ENCODE measurements at regions of chr11 and their contacts with region 1.

Region 1: GRCh38 chr11:69817265-69818230 is 1.7 kb downstream of the FGF3 start:
- DNase-seq: peak; percentile 43
- ATAC-seq: peak; percentile 27
- H3K4me3 Mint-ChIP-seq: peak overlapping the region; percentile 50
- H3K27ac Mint-ChIP-seq: no peak overlapping the region
- H3K4me1 Mint-ChIP-seq: peaks cover 7% of the 10 kb centered on the region; the same call in 1 of the 2 replicates
- H3K27me3 Mint-ChIP-seq: peaks cover 90% of the 10 kb centered on the region
- CTCF ChIP-seq: no peak

Region 2: GRCh38 chr11:69744435-69744834 is 73.1 kb before region 1 on chr11:
- CTCF ChIA-PET with region 1: no interaction called
- POLR2A ChIA-PET with region 1: no interaction called
- DNase-seq: no peak
- ATAC-seq: peak; percentile 27
- H3K4me3 Mint-ChIP-seq: no peak overlapping the region
- H3K27ac Mint-ChIP-seq: peak overlapping the region; percentile 87; the same call in 1 of the 2 replicates
- H3K4me1 Mint-ChIP-seq: peaks cover 16% of the 10 kb centered on the region
- H3K27me3 Mint-ChIP-seq: peaks cover 2% of the 10 kb centered on the region
- CTCF ChIP-seq: no peak

Region 3: DNA sequence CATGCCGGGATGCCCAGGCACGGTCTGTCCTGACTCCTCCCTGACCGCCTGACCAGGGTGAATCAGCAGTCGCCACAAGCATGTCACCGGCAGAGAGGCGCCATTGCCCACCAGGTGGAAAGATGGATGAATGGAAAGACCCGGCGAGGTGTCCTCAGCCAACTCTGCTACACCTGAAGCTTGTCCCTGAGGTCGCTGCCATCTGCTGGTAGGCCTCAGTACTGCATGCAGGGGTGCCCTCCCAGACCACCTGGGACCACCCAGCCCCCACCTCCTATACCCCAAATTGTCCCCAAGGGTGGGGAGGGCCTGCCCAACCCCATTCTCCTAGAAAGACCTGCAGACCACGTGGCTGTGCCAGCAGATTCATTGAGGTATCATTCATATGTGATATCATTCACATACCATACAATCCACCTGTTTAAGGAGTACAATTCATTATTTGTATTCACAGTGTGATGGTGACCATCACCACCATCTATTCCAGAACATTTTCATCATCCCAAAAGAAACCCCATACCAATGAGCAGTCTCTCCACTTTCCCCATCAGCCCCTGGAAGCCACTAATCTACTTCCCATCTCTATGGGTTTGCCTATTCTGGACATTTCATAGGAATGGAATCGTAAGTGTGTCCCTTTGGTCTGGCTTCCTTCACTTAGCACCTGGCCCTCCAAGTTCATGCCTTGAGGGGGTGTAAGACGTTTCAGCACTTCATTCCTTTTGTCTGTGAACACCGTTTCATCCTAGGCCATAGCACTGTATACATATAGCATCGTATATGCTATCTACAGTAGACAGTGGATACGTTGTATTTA is 15.8 kb before region 1 on chr11:
- CTCF ChIA-PET with region 1: interaction called, 12 read pairs
- POLR2A ChIA-PET with region 1: no interaction called
- DNase-seq: peak; percentile 95
- ATAC-seq: peak; percentile 83
- H3K4me3 Mint-ChIP-seq: no peak overlapping the region
- H3K27ac Mint-ChIP-seq: no peak overlapping the region
- H3K4me1 Mint-ChIP-seq: no peaks in the 10 kb centered on the region
- H3K27me3 Mint-ChIP-seq: no peaks in the 10 kb centered on the region; the same call in 1 of the 2 replicates
- CTCF ChIP-seq: peak; percentile 97

Region 4: GRCh38 chr11:69908501-69909220 is 91.1 kb after region 1 on chr11:
- CTCF ChIA-PET with region 1: no interaction called
- POLR2A ChIA-PET with region 1: no interaction called
- DNase-seq: peak; percentile 8
- ATAC-seq: no peak
- H3K4me3 Mint-ChIP-seq: no peak overlapping the region
- H3K27ac Mint-ChIP-seq: no peak overlapping the region
- H3K4me1 Mint-ChIP-seq: no peaks in the 10 kb centered on the region
- H3K27me3 Mint-ChIP-seq: peaks cover 2% of the 10 kb centered on the region; the same call in 1 of the 2 replicates
- CTCF ChIP-seq: no peak

Region 5: DNA sequence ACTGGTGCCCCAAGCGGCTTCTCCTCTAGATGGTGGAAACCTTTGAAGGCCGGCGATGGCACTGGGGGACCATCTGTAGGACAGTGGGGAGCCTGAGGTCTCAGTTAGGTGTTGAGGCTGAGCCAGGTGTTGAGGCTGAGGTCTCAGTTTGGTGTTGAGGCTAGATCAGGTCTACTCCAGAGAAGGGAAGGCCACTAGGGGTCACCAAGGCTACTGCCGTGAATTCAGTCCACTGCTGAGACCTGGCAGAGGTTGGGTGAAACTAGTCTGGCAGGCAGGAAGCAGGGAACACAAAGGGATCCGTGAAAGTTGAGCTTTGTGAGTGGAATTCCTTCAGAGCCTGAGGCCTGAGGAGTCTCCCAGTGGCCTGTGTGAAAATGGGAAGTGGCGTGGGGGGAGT is 125.5 kb after region 1 on chr11:
- CTCF ChIA-PET with region 1: no interaction called
- POLR2A ChIA-PET with region 1: no interaction called
- DNase-seq: peak; percentile 30
- ATAC-seq: peak; percentile 54
- H3K4me3 Mint-ChIP-seq: no peak overlapping the region
- H3K27ac Mint-ChIP-seq: no peak overlapping the region
- H3K4me1 Mint-ChIP-seq: peaks cover 7% of the 10 kb centered on the region
- H3K27me3 Mint-ChIP-seq: no peaks in the 10 kb centered on the region; the same call in 1 of the 2 replicates
- CTCF ChIP-seq: no peak